GM12878 (cell line): ENCODE measurements at regions of chr11 and their contacts with region 1.

Region 1: GRCh38 chr11:117098269-117099232 is at the start of gene SIK3:
- DNase-seq: peak; percentile 53
- ATAC-seq: peak; percentile 69
- H3K4me3 ChIP-seq: peak within 1 kb of the TSS; percentile 96
- H3K27ac ChIP-seq: peak within 1 kb of the TSS; percentile 81
- H3K4me1 ChIP-seq: peaks cover 25% of the 10 kb centered on the region
- H3K27me3 ChIP-seq: no peaks in the 10 kb centered on the region
- CTCF ChIP-seq: 0 out of 6 replicates have a peak, but pooled peaks of 1 of the 3 experiments have one; percentile 1
- EP300 ChIP-seq: peak in 1 of 2 experiments; percentile 71; a peak in 2 of 4 replicates
- POLR2A ChIP-seq: peak; percentile 79
- RAD21 ChIP-seq: no peak
- polyA plus RNA-seq, gene SIK3: 2.5 to 2.6 TPM

Region 2: DNA sequence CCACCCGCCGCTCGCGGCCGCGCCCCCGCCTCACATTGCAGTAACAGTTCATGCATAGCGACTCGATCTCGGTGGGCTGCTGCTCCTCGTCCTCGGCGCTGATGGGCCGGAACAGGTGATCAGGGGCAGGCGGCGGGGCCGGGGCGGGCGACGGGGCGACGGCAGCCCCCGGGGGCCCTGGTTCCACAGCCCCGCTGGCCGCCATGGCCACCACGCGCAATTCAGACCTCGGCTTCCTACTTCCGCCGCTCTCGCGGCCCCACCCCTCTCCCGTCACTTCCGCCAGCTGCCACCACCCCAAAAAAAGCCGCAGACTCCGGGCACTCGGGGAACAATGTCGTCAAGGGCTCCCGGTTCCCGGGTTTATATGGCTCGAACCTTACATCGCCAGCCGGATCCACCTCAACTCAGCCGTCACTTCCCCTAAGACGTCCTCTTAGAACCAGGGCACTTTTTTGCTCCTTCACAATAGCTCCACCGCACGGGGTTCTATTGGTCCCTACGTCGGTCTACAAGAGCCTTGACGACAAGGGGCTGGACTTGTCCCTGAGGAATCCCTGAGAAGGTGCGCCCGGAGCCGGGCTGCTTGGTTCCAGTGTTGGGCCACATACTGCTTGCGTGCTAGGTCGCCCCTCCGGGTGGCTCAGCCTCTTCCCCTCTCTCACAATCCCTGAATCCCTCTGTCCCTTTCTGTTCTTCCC is 310.6 kb before region 1 on chr11 and contains the start of gene ZPR1:
- CTCF ChIA-PET with region 1: interaction called, 6 read pairs
- POLR2A ChIA-PET with region 1: interaction called, 3 read pairs
- RAD21 ChIA-PET with region 1: interaction called, 8 read pairs
- SMC1A ChIA-PET with region 1: interaction called, 46 read pairs
- in situ Hi-C with region 1: loop called (anchors 5 kb)
- intact Hi-C with region 1: no loop called
- DNase-seq: no peak
- ATAC-seq: peak; percentile 86
- H3K4me3 ChIP-seq: peak within 1 kb of the TSS; percentile 96
- H3K27ac ChIP-seq: peak within 1 kb of the TSS; percentile 72
- H3K4me1 ChIP-seq: peaks cover 18% of the 10 kb centered on the region
- H3K27me3 ChIP-seq: no peaks in the 10 kb centered on the region
- CTCF ChIP-seq: no peak
- EP300 ChIP-seq: no peak
- POLR2A ChIP-seq: peak; percentile 96
- RAD21 ChIP-seq: no peak
- polyA plus RNA-seq, gene ZPR1: 9.3 to 20.4 TPM

Region 3: DNA sequence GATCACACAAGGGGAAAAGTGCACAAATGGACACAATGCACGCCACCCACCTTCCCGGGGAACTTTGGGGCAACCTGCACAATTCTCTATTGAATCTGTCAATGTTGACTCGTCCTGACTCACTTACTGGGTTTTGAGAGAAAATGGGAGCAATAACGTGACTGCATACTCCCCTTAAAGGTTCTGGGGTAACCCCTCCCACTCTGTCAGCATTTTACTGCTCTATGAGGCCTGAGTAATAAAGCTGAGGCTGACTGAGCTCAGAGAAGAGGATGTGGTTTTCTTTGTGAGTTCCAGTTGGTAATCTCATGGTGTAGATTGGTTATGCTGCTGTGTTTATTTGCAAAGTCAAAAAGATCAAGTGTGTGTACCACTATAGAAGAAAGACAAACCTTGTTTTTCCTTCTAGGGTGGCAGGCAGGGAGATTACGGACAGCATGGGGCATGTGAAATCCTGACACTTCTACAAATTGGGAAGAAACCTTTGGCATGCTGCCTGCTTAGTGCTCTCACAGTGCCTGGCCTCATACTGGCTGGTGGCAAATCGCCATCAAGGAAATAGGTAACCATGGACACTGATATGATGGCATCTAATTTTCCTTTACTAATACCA is 245.0 kb before region 1 on chr11:
- CTCF ChIA-PET with region 1: interaction called, 3 read pairs
- POLR2A ChIA-PET with region 1: interaction called, 3 read pairs
- RAD21 ChIA-PET with region 1: interaction called, 11 read pairs
- SMC1A ChIA-PET with region 1: interaction called, 6 read pairs
- in situ Hi-C with region 1: no loop called
- intact Hi-C with region 1: no loop called
- DNase-seq: peak; percentile 90
- ATAC-seq: peak; percentile 98
- H3K4me3 ChIP-seq: peak overlapping the region; percentile 31; the same call in 1 of the 2 replicates
- H3K27ac ChIP-seq: peak overlapping the region; percentile 83
- H3K4me1 ChIP-seq: peaks cover 30% of the 10 kb centered on the region
- H3K27me3 ChIP-seq: no peaks in the 10 kb centered on the region
- CTCF ChIP-seq: no peak
- EP300 ChIP-seq: peak; percentile 79 to 84
- POLR2A ChIP-seq: no peak
- RAD21 ChIP-seq: no peak

Region 4: DNA sequence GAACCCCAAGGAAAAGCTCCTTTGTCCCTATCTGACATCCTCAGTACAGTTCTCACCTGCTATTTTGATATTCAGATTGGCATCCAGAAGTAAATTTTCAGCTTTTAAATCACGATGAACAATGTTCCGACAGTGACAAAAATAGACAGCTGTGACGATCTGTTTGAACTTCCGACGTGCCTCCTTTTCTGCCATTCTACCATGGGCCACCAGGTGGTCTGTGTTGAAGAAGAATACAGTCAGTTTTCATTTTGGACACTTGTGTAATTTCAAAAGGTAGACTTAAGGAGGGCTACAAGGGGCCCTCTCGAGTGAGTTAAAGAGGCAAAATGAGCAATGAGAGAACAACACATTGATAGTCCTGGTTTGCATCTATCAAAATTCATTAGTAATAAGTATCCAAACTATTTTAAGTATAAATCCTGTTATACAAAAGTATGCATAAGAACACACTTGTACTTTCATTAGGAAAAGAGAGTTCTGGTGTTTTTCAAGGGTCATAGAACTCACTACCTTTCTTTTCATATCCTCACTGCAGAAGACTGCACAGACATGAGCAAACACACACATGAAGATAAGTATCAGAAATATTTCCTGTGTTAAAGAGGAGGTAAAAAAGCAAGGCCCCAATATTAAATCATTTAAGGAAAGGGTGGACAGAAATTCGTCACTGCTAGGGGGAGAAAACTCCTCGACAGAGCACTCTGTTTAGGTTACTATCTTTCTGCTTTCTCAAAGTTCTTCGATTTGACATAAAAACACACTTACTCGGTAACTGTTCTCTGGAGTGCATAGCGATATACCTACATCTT is 171.2 kb before region 1 on chr11:
- CTCF ChIA-PET with region 1: interaction called, 5 read pairs
- POLR2A ChIA-PET with region 1: interaction called, 5 read pairs
- RAD21 ChIA-PET with region 1: interaction called, 7 read pairs
- SMC1A ChIA-PET with region 1: interaction called, 21 read pairs
- in situ Hi-C with region 1: no loop called
- intact Hi-C with region 1: loop called (anchors 5 kb)
- DNase-seq: no peak
- ATAC-seq: no peak
- H3K4me3 ChIP-seq: no peak overlapping the region
- H3K27ac ChIP-seq: peak overlapping the region; percentile 26; the same call in 1 of the 2 replicates
- H3K4me1 ChIP-seq: peaks cover 64% of the 10 kb centered on the region
- H3K27me3 ChIP-seq: no peaks in the 10 kb centered on the region
- CTCF ChIP-seq: peak in 2 of 3 experiments; percentile 20 to 39; a peak in 2 of 6 replicates
- EP300 ChIP-seq: no peak
- POLR2A ChIP-seq: no peak
- RAD21 ChIP-seq: peak; percentile 56

Region 5: GRCh38 chr11:117020287-117020686 is 78.3 kb before region 1 on chr11:
- CTCF ChIA-PET with region 1: interaction called, 6 read pairs
- POLR2A ChIA-PET with region 1: interaction called, 9 read pairs
- RAD21 ChIA-PET with region 1: interaction called, 13 read pairs
- SMC1A ChIA-PET with region 1: interaction called, 65 read pairs
- in situ Hi-C with region 1: no loop called
- intact Hi-C with region 1: loop called (anchors 1 kb)
- DNase-seq: peak; percentile 51
- ATAC-seq: peak; percentile 43
- H3K4me3 ChIP-seq: 0 out of 2 replicates have a peak overlapping the region, but pooled peaks have one; percentile 2
- H3K27ac ChIP-seq: peak overlapping the region; percentile 49
- H3K4me1 ChIP-seq: peaks cover 51% of the 10 kb centered on the region
- H3K27me3 ChIP-seq: no peaks in the 10 kb centered on the region
- CTCF ChIP-seq: no peak
- EP300 ChIP-seq: 0 out of 4 replicates have a peak, but pooled peaks of 1 of the 2 experiments have one; percentile 3
- POLR2A ChIP-seq: no peak
- RAD21 ChIP-seq: no peak

Region 6: GRCh38 chr11:117064275-117064674 is 34.3 kb before region 1 on chr11:
- CTCF ChIA-PET with region 1: interaction called, 11 read pairs
- POLR2A ChIA-PET with region 1: interaction called, 17 read pairs
- RAD21 ChIA-PET with region 1: interaction called, 41 read pairs
- SMC1A ChIA-PET with region 1: interaction called, 28 read pairs
- in situ Hi-C with region 1: no loop called
- intact Hi-C with region 1: loop called (anchors 1 kb)
- DNase-seq: no peak
- ATAC-seq: no peak
- H3K4me3 ChIP-seq: no peak overlapping the region
- H3K27ac ChIP-seq: peak overlapping the region; percentile 78
- H3K4me1 ChIP-seq: peaks cover 29% of the 10 kb centered on the region
- H3K27me3 ChIP-seq: no peaks in the 10 kb centered on the region
- CTCF ChIP-seq: no peak
- EP300 ChIP-seq: no peak
- POLR2A ChIP-seq: no peak
- RAD21 ChIP-seq: no peak

Region 7: DNA sequence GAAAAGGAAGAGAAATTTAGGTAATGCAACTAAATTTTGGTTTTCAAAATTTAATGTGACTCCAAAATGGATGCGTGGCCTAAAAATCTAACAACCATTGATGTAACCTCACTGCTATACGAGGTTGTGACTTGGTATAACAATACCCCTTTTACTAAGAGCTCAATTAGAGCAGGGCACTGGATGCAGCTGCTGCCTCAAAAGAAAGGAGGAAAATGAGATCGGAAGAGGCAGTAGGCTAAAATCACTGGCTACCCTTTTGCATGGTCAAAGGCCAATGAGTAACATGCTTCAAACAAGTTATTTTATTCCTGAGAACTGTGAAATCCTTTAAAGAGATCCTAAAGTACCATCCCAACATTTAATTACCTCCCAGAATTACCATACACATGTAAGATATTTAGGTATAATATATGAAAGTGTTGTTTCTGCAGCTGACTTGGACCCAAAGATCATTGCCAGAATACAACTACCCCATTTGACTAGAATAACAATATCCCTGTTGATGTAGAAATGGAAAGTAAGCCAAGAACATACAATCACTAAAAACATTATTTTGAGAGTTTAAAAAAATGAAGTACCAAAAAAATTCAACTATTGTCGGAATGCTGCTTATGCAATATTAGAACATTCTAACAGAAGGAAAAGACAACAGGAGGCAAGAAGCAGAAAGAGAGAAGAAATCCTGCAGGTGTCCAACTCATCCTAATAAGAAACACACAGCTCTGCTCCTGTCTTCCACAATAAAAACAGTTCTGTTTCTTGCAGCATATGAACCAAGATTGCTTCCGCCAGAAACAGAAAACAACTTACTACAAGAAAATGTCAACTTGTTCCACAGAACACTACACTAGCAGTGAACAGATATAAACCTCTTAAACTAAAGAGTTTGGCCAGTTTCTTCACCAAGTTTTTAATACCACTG is 15.3 kb before region 1 on chr11:
- CTCF ChIA-PET with region 1: interaction called, 7 read pairs
- POLR2A ChIA-PET with region 1: interaction called, 13 read pairs
- RAD21 ChIA-PET with region 1: interaction called, 5 read pairs
- SMC1A ChIA-PET with region 1: interaction called, 73 read pairs
- in situ Hi-C with region 1: no loop called
- intact Hi-C with region 1: no loop called
- DNase-seq: no peak
- ATAC-seq: no peak
- H3K4me3 ChIP-seq: no peak overlapping the region
- H3K27ac ChIP-seq: no peak overlapping the region
- H3K4me1 ChIP-seq: no peaks in the 10 kb centered on the region; the same call in none of the 2 replicates
- H3K27me3 ChIP-seq: no peaks in the 10 kb centered on the region
- CTCF ChIP-seq: no peak
- EP300 ChIP-seq: no peak
- POLR2A ChIP-seq: no peak
- RAD21 ChIP-seq: no peak

Region 8: GRCh38 chr11:117259417-117259816 is 160.9 kb after region 1 on chr11:
- CTCF ChIA-PET with region 1: no interaction called
- POLR2A ChIA-PET with region 1: no interaction called
- RAD21 ChIA-PET with region 1: no interaction called
- SMC1A ChIA-PET with region 1: no interaction called
- in situ Hi-C with region 1: no loop called
- intact Hi-C with region 1: no loop called
- DNase-seq: no peak
- ATAC-seq: no peak
- H3K4me3 ChIP-seq: no peak overlapping the region
- H3K27ac ChIP-seq: no peak overlapping the region
- H3K4me1 ChIP-seq: no peaks in the 10 kb centered on the region
- H3K27me3 ChIP-seq: no peaks in the 10 kb centered on the region
- CTCF ChIP-seq: no peak
- EP300 ChIP-seq: no peak
- POLR2A ChIP-seq: no peak
- RAD21 ChIP-seq: no peak